Activated CD4-positive, alpha-beta memory T cell treated with anti-CD3 and anti-CD28 coated beads for 36 hours (primary cell): ENCODE measurements at regions of chr2 and their contacts with region 1.

Region 1: GRCh38 chr2:15657759-15658158 is 66.1 kb downstream of the DDX1 start:
- DNase-seq: no peak
- H3K4me3 Mint-ChIP-seq: no peak overlapping the region
- H3K27ac Mint-ChIP-seq: no peak overlapping the region
- H3K4me1 Mint-ChIP-seq: no peaks in the 10 kb centered on the region
- H3K27me3 Mint-ChIP-seq: no peaks in the 10 kb centered on the region

Region 2: GRCh38 chr2:15708865-15709820 is 51.4 kb after region 1 on chr2:
- CTCF ChIA-PET with region 1: no interaction called
- POLR2A ChIA-PET with region 1: no interaction called
- intact Hi-C with region 1: loop called (anchors 2 kb)
- DNase-seq: no peak
- H3K4me3 Mint-ChIP-seq: no peak overlapping the region
- H3K27ac Mint-ChIP-seq: no peak overlapping the region
- H3K4me1 Mint-ChIP-seq: no peaks in the 10 kb centered on the region
- H3K27me3 Mint-ChIP-seq: peaks cover 8% of the 10 kb centered on the region